Esophagus squamous epithelium (tissue), 5 donors: ENCODE measurements at regions of chr9 and their contacts with region 1.

Region 1: GRCh38 chr9:111759762-111760639 is 34.7 kb downstream of the SHOC1 start:
- DNase-seq: no peak
- H3K4me3 ChIP-seq: no peak overlapping the region
- H3K27ac ChIP-seq: no peak overlapping the region
- H3K4me1 ChIP-seq: no peaks in the 10 kb centered on the region
- H3K27me3 ChIP-seq: no peaks in the 10 kb centered on the region
- CTCF ChIP-seq: peak; percentile 41 to 88 (median 68)
- POLR2A ChIP-seq: no peak

Region 2: DNA sequence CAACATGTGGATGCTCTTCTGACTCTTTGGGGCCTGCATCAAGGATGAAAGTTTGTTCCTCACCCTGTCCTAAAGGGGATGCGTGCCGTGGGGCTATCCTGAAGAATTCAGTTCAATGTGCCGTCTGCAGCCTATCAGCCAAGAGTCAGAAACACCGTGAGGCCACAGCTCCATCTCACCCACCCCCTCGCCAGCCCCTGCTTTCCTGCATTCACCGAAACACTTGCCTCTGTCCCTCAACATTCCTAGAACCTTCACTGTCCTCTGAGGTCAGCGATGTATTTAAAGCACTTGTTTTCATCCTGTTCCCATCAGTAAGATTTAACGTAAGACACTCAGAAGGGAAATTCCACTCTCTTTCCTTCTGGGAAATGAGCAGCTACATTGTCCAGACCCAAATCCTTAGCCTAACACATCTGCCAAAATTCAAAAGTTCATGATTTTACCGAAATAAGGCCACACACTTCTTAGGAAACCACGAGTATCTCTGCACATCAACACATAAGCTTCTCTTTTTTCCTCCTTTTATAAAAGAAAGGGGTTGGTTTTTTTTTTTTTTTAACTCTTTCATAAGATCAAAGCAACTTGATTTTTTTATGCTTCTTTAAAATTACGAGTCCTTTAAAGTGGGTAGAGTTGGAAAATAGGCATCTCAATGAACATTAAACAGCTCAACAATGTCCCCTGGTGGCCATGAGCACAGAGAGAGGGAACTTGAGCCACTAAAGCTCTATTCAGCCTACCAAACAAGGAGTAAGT is 314.4 kb after region 1 on chr9:
- intact Hi-C with region 1: loop called (anchors 5 kb)
- DNase-seq: no peak
- H3K4me3 ChIP-seq: no peak overlapping the region
- H3K27ac ChIP-seq: peak overlapping the region; percentile 17 to 72 (median 59)
- H3K4me1 ChIP-seq: peaks cover 3 to 50% (median 15%) of the 10 kb centered on the region in 3 donors
- H3K27me3 ChIP-seq: no peaks in the 10 kb centered on the region
- CTCF ChIP-seq: peak; percentile 53 to 98 (median 92)
- POLR2A ChIP-seq: no peak

Region 3: GRCh38 chr9:112361601-112362000 is 601.6 kb after region 1 on chr9:
- intact Hi-C with region 1: loop called (anchors 10 kb)
- DNase-seq: no peak
- H3K4me3 ChIP-seq: no peak overlapping the region
- H3K27ac ChIP-seq: no peak overlapping the region
- H3K4me1 ChIP-seq: peaks cover 0 to 4% (median 3%) of the 10 kb centered on the region in 3 donors
- H3K27me3 ChIP-seq: no peaks in the 10 kb centered on the region
- CTCF ChIP-seq: peak; percentile 40 to 74 (median 57)
- POLR2A ChIP-seq: no peak